ENCODE measurements at regions of chrX and their contacts with region 1.

Region 1: GRCh38 chrX:41858161-41858775 is 65.1 kb downstream of the CASK start:
- DNase-seq: no peak
- ATAC-seq: no peak
- H3K4me3 ChIP-seq: no peak overlapping the region
- H3K27ac ChIP-seq: no peak overlapping the region
- H3K4me1 ChIP-seq: no peaks in the 10 kb centered on the region
- H3K27me3 ChIP-seq: no peaks in the 10 kb centered on the region
- CTCF ChIP-seq: no peak
- EP300 ChIP-seq: no peak
- POLR2A ChIP-seq: no peak
- RAD21 ChIP-seq: no peak

Region 2: DNA sequence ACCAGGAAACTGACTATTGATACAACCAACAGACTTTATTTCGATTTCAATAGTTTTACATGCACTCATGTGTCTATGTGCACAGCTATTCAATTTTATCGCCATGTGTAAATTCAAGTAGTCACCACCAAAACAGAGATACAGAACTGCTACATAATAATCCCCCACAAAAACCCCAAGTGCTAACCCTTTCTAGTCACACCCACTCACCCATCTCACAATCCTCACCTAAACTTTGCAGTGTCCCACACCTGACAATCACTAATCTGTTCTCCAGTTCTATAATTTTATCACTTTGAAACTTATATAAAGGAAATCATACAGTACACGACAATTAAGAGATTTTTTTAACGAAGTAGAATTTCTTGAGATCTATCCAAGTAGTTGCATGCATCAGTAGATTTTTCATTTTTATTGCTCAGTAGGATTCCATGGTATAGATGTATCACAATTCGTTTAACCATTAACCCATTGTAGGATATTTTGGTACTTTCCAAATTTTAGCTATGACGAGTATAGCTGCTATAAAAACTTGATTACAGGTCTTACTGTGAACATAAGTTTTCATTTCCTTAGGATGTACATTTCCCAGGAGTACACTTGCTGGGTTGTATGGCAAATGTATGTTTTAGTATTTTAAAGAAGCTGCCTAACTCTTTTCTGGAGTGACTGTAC is 20.9 kb before region 1 on chrX:
- CTCF ChIA-PET with region 1: interaction called, 3 read pairs
- POLR2A ChIA-PET with region 1: no interaction called
- RAD21 ChIA-PET with region 1: interaction called, 3 read pairs
- SMC1A ChIA-PET with region 1: interaction called, 12 read pairs
- in situ Hi-C with region 1: no loop called
- intact Hi-C with region 1: no loop called
- DNase-seq: no peak
- ATAC-seq: peak; percentile 93
- H3K4me3 ChIP-seq: no peak overlapping the region
- H3K27ac ChIP-seq: no peak overlapping the region
- H3K4me1 ChIP-seq: no peaks in the 10 kb centered on the region
- H3K27me3 ChIP-seq: no peaks in the 10 kb centered on the region
- CTCF ChIP-seq: no peak
- EP300 ChIP-seq: peak; percentile 8 to 61; a peak in 1 of 4 replicates
- POLR2A ChIP-seq: no peak
- RAD21 ChIP-seq: no peak

Measured in GM12878 (cell line).